IMR-90 (cell line): ENCODE measurements at regions of chr19 and their contacts with region 1.

Region 1: DNA sequence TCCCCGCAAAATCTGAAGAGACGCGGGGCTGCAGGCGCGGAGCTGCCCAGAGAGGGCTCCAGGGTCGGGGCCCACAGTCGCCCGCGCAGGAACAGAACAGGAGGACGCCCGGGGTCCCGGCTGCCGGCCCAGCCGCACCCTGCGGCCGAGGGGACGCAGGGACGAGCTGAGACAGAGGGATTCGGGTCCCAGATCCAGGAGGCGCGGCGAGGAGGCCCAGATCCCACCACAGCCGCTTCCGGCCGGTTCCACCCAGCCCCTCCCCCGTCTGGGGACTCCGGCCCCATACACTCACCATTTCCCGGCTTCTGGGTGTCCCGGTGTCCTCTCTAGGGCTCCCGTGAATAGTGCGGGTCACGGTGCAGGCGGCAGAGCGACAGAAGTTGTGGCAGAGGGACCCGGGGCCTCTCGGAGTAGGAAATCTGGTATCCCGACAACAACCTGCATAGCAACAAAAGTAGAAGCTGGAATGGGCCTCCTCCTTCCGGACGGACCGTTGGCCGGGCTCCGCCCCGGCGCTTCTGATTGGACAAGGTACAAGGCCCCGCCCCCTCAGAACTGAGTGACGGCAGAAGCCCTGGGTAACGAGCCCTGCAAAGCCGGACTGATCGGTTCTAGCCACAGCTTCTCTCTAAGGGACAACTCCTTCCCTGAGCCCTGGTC is at the start of gene ZNF20:
- DNase-seq: peak; percentile 91
- ATAC-seq: peak; percentile 98
- H3K4me3 ChIP-seq: peak within 1 kb of the TSS; percentile 96
- H3K27ac ChIP-seq: peak within 1 kb of the TSS; percentile 82
- H3K4me1 ChIP-seq: peaks cover 3% of the 10 kb centered on the region; the same call in 1 of the 2 replicates
- H3K27me3 ChIP-seq: no peaks in the 10 kb centered on the region
- CTCF ChIP-seq: no peak
- POLR2A ChIP-seq: peak; percentile 66
- RAD21 ChIP-seq: no peak
- total RNA-seq, gene ZNF20: 7.8 and 7.9 TPM in 2 replicates

Region 2: DNA sequence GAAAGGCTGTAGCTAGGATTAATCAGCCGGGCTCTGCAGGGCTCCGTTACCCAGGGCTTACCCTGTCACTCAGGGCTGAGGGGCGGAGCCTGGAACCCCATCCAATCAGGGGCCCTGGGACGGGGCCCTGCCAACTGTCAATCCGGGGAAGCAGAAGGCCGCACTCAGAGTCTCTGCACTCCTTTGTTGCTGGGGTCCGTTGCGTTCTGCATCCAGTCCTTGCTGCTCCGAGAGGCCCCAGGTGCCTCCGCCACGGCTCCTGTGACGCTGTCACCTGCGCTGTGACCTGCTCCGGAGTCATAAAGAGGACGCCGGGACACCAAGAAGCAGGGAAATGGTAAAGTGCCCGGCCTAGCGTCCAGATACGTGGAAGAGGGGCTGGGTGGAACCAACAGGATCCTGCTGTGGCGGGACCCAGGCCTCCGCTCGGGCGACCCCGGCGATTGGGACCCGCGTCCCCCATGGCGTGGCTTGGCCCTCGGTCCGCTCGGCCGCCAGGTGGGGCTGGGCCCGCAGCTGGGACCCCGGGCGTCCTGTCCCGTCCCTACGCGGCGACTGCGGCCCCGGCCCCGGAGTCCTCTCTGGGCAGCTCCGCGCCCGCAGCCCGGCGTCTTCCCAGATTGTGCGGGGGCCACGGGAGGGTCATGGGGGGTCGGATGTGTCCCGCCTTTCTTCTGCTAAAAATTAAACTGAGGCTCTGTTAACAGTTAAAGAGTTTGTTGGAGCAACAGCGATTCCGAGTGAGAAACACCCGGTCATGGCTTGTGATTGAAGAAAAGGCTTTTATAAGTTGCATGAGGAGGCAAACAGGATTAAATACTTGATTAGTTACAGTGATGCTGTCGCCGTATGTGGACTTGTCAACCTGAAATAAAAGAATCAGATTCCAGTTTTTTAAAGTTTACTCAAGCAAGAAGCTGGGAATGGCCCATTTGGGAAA is 341.4 kb before region 1 on chr19 and contains the start of gene ZNF491:
- CTCF ChIA-PET with region 1: interaction called, 6 read pairs
- POLR2A ChIA-PET with region 1: no interaction called
- dilution Hi-C with region 1: no loop called
- in situ Hi-C with region 1: no loop called
- intact Hi-C with region 1: loop called (anchors 1 kb)
- DNase-seq: peak; percentile 87
- ATAC-seq: peak; percentile 99
- H3K4me3 ChIP-seq: peak within 1 kb of the TSS; percentile 76
- H3K27ac ChIP-seq: peak within 1 kb of the TSS; percentile 58
- H3K4me1 ChIP-seq: 0 out of 2 replicates have a peak, but pooled peaks cover 4% of the 10 kb centered on the region
- H3K27me3 ChIP-seq: no peaks in the 10 kb centered on the region
- CTCF ChIP-seq: peak; percentile 31
- POLR2A ChIP-seq: peak; percentile 52; the same call in 1 of the 2 replicates
- RAD21 ChIP-seq: no peak
- total RNA-seq, gene ZNF491: 3.6 and 4.2 TPM in 2 replicates

Region 3: GRCh38 chr19:11964858-11965645 is 175.0 kb before region 1 on chr19 and contains the start of gene ZNF763:
- CTCF ChIA-PET with region 1: no interaction called
- POLR2A ChIA-PET with region 1: no interaction called
- dilution Hi-C with region 1: no loop called
- in situ Hi-C with region 1: no loop called
- intact Hi-C with region 1: loop called (anchors 1 kb)
- DNase-seq: peak; percentile 75
- ATAC-seq: peak; percentile 95
- H3K4me3 ChIP-seq: peak within 1 kb of the TSS; percentile 77
- H3K27ac ChIP-seq: peak within 1 kb of the TSS; percentile 78
- H3K4me1 ChIP-seq: peaks cover 2% of the 10 kb centered on the region; the same call in 1 of the 2 replicates
- H3K27me3 ChIP-seq: no peaks in the 10 kb centered on the region
- CTCF ChIP-seq: no peak
- POLR2A ChIP-seq: peak; percentile 21; the same call in 1 of the 2 replicates
- RAD21 ChIP-seq: no peak
- total RNA-seq, gene ZNF763: 0.56 and 0.90 TPM in 2 replicates

Region 4: DNA sequence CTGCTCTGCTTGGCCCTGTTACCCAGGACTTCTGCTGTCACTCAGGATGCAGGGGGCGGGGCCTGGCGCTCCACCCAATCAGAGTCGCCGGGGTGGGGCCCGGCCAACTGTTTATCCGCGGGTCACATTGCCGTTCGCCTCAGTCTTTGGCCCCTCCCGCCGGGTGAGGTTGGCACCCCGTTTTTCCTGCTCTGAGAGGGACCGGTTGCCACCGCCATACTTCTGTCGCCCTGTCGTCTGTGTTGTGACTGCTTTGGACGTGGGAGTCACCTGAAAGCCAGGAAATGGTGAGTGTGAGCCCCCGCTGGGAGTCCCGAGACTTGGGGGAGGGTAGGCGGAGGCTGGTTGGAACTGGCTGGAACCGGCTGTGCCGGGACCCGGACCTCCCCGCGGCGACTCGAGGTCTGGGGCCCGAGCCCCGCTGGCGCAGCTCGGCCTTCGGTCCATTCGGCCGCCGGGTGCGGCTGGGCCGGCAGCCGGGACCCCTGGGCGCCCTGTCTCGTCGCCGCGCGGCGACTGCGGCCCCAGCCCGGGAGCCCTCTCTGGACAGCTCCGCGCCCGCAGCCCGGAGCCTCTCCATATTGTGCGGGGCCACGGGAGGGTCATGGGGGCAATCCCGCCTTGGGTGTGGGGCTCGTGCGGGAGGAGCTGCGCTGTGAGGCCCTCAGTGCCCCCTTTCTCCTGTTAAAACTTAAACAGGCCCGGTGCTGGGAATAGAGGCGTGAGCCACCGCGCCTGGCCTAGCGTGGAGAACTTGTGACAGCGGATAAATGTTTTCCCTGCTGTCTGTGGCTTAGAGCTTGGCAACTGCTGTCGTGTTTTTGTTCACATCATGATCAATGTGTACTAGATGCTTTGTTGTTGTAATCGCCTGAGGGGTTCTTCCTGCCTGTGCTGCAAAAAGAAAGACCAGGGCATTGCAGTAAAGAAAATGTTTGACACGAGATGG is 75.2 kb before region 1 on chr19 and contains the start of gene ZNF844:
- CTCF ChIA-PET with region 1: interaction called, 22 read pairs
- POLR2A ChIA-PET with region 1: no interaction called
- dilution Hi-C with region 1: no loop called
- in situ Hi-C with region 1: no loop called
- intact Hi-C with region 1: no loop called
- DNase-seq: peak; percentile 81
- ATAC-seq: peak; percentile 98
- H3K4me3 ChIP-seq: peak within 1 kb of the TSS; percentile 91
- H3K27ac ChIP-seq: peak within 1 kb of the TSS; percentile 89
- H3K4me1 ChIP-seq: no peaks in the 10 kb centered on the region; the same call in 1 of the 2 replicates
- H3K27me3 ChIP-seq: no peaks in the 10 kb centered on the region
- CTCF ChIP-seq: no peak
- POLR2A ChIP-seq: peak; percentile 90
- RAD21 ChIP-seq: no peak
- total RNA-seq, gene ZNF844: 8.1 and 12.0 TPM in 2 replicates

Region 5: DNA sequence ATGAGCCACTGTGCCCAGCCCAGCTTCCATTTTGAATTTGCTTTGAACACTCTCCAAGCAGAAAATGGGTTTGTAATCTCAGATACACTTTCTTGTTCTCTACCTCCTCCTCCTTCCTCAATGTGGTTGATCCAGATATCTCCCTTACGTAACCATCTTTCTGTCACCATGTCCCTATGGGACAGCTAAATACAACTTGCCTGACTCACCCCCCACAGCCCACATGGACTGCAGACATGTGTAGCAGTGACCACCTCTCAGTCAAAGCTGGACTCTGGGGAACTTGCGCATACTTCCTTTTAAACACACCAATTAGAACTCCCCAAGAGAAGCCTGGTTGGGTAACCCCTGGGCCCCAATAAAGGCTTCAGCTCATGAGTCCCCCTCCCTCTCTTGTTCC is 271.9 kb after region 1 on chr19:
- CTCF ChIA-PET with region 1: no interaction called
- POLR2A ChIA-PET with region 1: no interaction called
- dilution Hi-C with region 1: no loop called
- in situ Hi-C with region 1: no loop called
- intact Hi-C with region 1: no loop called
- DNase-seq: no peak
- ATAC-seq: no peak
- H3K4me3 ChIP-seq: no peak overlapping the region
- H3K27ac ChIP-seq: no peak overlapping the region
- H3K4me1 ChIP-seq: no peaks in the 10 kb centered on the region
- H3K27me3 ChIP-seq: no peaks in the 10 kb centered on the region
- CTCF ChIP-seq: no peak
- POLR2A ChIP-seq: no peak
- RAD21 ChIP-seq: no peak

Region 6: DNA sequence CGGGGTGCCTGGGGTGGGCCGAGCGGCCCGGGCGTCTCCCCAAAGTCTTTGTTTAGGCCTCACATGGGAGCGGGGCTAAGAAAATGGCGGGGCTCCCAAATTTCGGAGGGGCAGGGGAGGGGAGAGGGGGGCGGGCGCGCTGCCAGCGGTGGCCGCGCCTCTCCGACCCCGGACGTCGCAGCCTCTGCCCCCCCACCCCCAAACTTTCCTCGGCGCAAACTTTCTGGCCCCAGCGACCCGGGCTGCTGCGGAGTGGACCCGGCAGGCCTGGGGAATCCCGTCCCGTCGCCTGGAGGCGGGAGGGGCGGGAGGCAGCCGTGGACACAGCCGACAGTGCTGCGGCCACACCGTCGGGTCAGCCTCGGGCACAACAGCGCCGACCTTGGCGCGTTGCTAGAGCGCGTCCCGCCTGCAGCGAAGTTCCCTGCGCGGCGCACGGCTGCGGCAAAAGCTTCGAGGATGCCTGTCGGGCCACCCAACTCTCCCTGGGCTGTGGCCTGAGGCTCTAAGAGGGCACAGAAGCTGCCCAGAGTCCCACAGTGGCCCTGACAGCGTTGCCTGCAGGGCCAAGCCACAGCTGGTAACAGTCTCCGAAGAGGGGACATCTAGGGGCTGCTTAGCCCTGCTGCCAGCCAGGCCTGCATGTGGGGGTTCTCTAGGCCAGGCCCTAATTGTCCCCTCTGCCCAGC is 856.5 kb after region 1 on chr19:
- CTCF ChIA-PET with region 1: no interaction called
- POLR2A ChIA-PET with region 1: no interaction called
- dilution Hi-C with region 1: no loop called
- in situ Hi-C with region 1: no loop called
- intact Hi-C with region 1: no loop called
- DNase-seq: peak; percentile 22
- ATAC-seq: peak; percentile 53
- H3K4me3 ChIP-seq: peak overlapping the region; percentile 93
- H3K27ac ChIP-seq: peak overlapping the region; percentile 76
- H3K4me1 ChIP-seq: peaks cover 15% of the 10 kb centered on the region
- H3K27me3 ChIP-seq: no peaks in the 10 kb centered on the region
- CTCF ChIP-seq: no peak
- POLR2A ChIP-seq: no peak
- RAD21 ChIP-seq: no peak

Region 7: DNA sequence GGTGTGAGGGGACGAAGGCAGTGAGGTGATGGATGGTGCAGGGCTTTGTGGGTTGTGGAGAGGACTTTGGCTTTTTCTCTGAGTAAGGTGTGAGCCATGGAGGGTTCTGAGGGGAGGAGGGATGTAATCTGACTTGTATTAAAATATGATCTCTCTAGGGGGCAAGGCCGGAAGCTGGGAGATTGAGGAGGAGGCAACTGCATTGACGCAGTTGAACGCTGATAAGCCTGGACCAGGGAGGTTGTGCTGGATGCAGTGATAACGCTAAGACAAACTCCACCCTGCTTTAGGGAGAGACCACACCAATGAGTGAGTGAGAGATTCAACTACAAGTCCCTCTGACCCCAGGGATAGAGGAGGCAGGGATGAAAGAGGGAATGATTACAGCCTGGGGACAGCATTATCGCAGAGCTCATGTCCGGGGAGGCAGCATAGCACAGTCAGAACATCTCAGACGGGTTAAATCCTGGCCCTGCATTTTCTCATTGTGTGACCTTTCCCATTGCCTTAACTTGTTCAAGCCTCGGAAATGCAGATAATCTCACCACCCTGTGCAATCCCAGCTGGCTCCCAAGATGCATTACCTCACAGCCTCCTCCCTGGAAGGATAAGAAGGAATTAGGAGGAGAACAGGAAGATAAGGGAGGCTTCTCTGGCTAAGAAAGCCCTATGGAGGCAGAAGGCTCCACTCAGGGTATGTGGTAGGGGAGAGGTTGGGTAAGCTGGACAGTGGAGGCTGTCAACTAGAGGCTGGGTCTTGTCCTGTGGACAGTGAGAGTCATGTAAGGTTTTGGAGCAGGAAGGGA is 1242.0 kb after region 1 on chr19:
- CTCF ChIA-PET with region 1: no interaction called
- POLR2A ChIA-PET with region 1: no interaction called
- dilution Hi-C with region 1: no loop called
- in situ Hi-C with region 1: no loop called
- intact Hi-C with region 1: no loop called
- DNase-seq: peak; percentile 4
- ATAC-seq: no peak; the same call in 1 of the 2 replicates
- H3K4me3 ChIP-seq: no peak overlapping the region
- H3K27ac ChIP-seq: no peak overlapping the region
- H3K4me1 ChIP-seq: no peaks in the 10 kb centered on the region
- H3K27me3 ChIP-seq: no peaks in the 10 kb centered on the region
- CTCF ChIP-seq: no peak
- POLR2A ChIP-seq: no peak
- RAD21 ChIP-seq: no peak